ENCODE measurements at regions of chr1 and their contacts with region 1.

Region 1: GRCh38 chr1:67535474-67535873 is 105.3 kb upstream of the SERBP1 start:
- DNase-seq: peak; percentile 86 to 89
- H3K4me3 ChIP-seq: no peak overlapping the region
- H3K27ac ChIP-seq: peak overlapping the region in 2 of 3 donors; percentile 96 to 97
- H3K4me1 ChIP-seq: peaks cover 32 to 44% of the 10 kb centered on the region in 2 donors
- H3K27me3 ChIP-seq: no peaks in the 10 kb centered on the region
- CTCF ChIP-seq: peak; percentile 90 to 98 (median 97)
- POLR2A ChIP-seq: no peak

Region 2: GRCh38 chr1:67184838-67185421 is 350.5 kb before region 1 on chr1:
- intact Hi-C with region 1: no loop called
- DNase-seq: no peak
- H3K4me3 ChIP-seq: no peak overlapping the region
- H3K27ac ChIP-seq: no peak overlapping the region
- H3K4me1 ChIP-seq: no peaks in the 10 kb centered on the region
- H3K27me3 ChIP-seq: no peaks in the 10 kb centered on the region
- CTCF ChIP-seq: no peak
- POLR2A ChIP-seq: no peak

Region 3: DNA sequence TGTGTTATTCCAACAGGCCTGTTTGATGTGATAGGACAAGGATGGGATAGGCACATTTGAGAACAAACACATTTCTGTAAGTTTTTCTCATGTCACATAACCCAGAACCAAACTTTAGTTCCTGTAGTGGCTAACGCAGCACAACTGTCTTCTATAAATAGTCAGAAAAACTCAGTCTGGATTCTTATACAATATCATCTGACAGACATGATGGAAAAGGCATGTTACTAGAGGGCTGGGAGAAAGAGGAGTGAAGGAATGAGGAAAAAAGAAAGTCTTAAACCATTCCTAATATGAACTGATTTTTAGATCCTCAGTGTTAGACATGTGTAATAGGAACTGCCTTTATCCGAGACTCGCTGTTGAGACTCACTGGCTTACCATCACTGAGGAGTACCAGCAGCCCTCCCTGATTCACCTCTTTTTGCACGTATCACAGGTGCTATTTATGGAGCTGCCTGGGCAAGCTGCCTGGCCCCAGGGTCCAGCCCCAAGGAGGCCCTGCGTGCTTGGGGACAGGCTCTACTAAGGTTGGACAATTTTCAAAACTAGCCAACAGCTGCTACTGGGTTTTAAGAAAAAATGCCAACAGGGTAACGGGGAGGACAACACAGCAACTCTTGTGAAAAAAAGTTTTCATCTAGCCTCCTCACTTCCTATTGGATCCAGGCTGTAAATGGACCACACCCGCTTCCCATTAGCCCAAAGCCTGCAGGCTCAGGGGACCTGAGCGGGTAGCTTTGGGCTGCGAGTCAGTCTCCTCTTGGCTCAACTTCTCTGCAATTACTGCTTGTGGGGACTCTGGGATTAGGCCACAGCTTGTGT is 74.6 kb before region 1 on chr1:
- intact Hi-C with region 1: no loop called
- DNase-seq: no peak
- H3K4me3 ChIP-seq: no peak overlapping the region
- H3K27ac ChIP-seq: no peak overlapping the region
- H3K4me1 ChIP-seq: no peaks in the 10 kb centered on the region
- H3K27me3 ChIP-seq: no peaks in the 10 kb centered on the region
- CTCF ChIP-seq: no peak
- POLR2A ChIP-seq: no peak

Region 4: GRCh38 chr1:67832737-67833601 is 297.5 kb after region 1 on chr1 and contains the start of gene GNG12:
- intact Hi-C with region 1: loop called (anchors 10 kb)
- DNase-seq: peak; percentile 84
- H3K4me3 ChIP-seq: peak within 1 kb of the TSS; percentile 26 to 76 (median 56)
- H3K27ac ChIP-seq: peak within 1 kb of the TSS; percentile 66 to 97 (median 92)
- H3K4me1 ChIP-seq: peaks cover 17 to 27% of the 10 kb centered on the region in 2 donors
- H3K27me3 ChIP-seq: no peaks in the 10 kb centered on the region
- CTCF ChIP-seq: no peak
- POLR2A ChIP-seq: peak; percentile 20 to 83
- total RNA-seq, gene GNG12: 100 to 155 (median 127) TPM

Measured in thyroid gland (tissue), 4 donors.